ENCODE measurements at regions of chr20 and their contacts with region 1.

Region 1: DNA sequence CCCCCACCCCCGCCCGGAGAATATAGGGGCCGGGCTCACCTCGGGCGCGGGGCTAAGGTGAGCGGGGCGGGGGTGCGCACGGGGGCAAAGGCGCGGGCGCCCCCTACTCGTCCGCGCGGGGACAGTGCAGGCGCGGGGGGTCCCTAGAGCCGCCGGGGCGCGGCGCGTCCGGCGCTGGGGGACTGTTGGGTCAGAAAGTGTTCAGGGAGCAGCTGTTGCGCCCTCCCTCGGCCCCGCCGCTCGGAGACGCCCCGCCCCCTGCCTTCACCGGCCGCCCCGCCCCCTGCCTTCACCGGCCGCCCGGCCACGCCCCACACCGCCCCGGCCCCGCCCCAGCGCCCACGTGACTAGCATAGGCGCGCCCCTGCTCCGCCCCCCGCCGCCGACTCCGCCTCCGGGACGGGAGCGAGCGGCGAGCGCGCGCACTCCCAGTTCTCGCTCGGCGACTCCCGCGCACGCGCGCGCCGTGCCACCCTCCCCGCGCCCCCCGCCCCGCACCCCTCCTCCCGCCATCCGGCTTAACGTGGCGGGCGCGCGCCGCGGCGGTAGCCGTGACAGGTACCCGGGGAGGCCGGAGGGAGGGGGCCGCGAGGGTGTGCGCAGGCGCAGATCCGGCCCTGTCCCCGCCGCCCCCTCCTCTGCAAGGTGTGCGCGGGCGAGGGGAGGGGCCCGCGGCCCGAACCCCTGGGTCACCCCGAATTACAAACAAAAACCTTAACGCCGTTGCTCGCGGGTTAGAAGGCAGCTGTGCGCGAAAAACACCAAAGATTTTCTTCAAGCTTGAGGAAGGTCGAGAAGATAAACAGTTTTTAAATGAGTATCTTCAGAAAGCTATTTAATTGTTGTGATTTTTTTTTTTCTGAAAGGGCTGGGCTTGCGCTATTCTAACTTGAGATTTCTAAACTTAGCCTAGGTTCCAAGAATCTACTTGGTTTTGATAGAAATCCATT is 704 bp upstream of the ZNF217 start:
- DNase-seq: peak; percentile 48 to 95
- ATAC-seq: peak; percentile 79 to 80
- H3K4me3 ChIP-seq: peak overlapping the region; percentile 94
- H3K27ac ChIP-seq: peak overlapping the region; percentile 99 to 100
- H3K4me1 ChIP-seq: peaks cover 35% of the 10 kb centered on the region
- CTCF ChIP-seq: peak; percentile 45
- EP300 ChIP-seq: peak in 1 of 2 experiments; percentile 9; a peak in 1 of 5 replicates
- POLR2A ChIP-seq: peak; percentile 20; the same call in 1 of the 2 replicates
- RAD21 ChIP-seq: peak; percentile 29 to 68; a peak in 4 of 5 replicates

Region 2: DNA sequence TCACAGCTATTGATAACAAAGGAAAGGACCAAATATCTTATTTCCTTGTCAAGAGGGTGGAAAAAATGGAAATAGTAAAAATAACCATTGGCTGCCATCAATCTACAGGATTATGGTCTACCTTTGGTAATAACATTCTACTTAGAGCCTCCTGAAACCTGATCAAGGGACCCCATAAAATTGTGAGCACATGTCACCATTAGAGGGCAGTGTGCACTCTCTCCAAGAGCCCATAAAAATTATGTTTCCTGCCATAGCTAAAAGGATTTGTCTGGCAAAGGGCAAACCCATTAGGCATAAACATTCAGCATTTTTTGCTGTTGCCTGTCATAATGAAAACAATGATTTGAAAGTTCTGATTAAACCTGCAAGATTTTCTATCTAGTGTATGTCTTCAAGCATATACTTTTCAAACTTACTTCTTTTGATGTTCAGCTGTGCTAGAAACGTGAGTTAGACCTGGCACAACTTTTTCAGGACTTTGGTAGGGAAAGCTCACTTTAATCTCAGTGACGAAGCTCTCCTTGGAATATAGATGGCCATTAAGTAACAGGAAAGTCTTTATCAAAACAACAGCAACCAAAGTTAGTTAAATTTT is 1282.1 kb before region 1 on chr20:
- CTCF ChIA-PET with region 1: no interaction called
- POLR2A ChIA-PET with region 1: interaction called, 10 read pairs
- DNase-seq: peak; percentile 55 to 69
- ATAC-seq: peak; percentile 66 to 81; a peak in 4 of 6 replicates
- H3K4me3 ChIP-seq: no peak overlapping the region
- H3K27ac ChIP-seq: no peak overlapping the region
- H3K4me1 ChIP-seq: peaks cover 5% of the 10 kb centered on the region; the same call in 1 of the 3 replicates
- CTCF ChIP-seq: peak; percentile 71
- EP300 ChIP-seq: no peak
- POLR2A ChIP-seq: no peak
- RAD21 ChIP-seq: peak; percentile 63

Region 3: DNA sequence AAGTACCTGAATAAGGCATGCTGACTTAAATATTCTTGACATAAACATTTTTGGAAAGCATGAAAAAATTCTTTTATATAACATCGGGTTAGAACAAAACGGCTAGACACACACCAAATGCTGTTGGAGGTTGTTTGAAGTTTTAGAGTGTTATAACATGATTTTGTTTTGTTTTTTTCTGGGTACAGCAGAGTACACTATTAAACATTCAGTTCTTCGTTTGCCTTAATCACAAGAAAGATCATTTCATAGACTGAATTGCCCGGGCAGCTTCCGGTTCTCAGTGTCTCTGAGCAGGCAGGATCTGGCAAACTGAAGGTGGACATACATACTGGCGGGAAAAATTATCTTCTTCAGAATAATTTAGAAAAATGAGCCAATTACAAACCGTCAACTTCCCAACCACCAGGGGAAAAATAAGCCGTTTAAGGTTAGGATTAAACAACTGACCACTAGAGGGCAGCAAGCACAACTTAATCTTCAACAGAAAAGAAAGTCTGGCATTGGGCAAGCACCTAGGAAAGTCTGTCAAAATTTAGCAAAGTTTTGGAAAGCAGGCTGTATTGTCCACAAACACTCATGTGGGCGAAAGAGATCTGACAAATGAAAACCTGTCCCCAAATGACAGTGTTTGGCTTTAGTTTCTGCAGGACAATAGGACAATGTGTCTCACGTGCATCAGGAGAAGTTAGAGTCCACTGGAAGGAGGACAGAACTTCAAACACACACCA is 15.7 kb before region 1 on chr20:
- CTCF ChIA-PET with region 1: interaction called, 6 read pairs
- POLR2A ChIA-PET with region 1: interaction called, 18 read pairs
- DNase-seq: peak; percentile 90
- ATAC-seq: peak; percentile 57 to 73; a peak in 5 of 6 replicates
- H3K4me3 ChIP-seq: peak overlapping the region; percentile 21; the same call in 2 of the 3 replicates
- H3K27ac ChIP-seq: peak overlapping the region; percentile 75 to 87
- H3K4me1 ChIP-seq: peaks cover 62% of the 10 kb centered on the region
- CTCF ChIP-seq: peak; percentile 91
- EP300 ChIP-seq: no peak
- POLR2A ChIP-seq: no peak
- RAD21 ChIP-seq: peak; percentile 83 to 91

Region 4: DNA sequence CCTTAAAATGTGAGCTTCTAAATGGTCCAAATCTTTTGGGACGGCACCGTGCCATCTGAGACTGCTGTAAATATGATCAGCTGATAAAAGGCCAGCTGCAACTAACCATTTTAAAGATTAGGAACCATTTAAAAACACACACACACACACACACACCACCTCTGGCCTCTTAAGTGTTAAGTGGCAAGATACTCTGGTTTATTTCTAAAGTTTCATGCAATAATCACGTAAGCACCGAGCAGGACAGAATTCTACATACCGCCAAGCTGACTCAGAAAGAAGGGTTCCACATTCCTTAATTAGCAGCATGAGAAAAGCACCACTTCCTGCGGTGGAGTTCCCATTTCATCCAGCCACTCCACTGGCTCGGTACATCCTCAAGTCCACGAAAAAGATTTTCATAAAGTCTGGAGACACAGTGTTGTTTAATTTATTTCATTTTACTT is 17.1 kb after region 1 on chr20:
- CTCF ChIA-PET with region 1: interaction called, 3 read pairs
- POLR2A ChIA-PET with region 1: interaction called, 24 read pairs
- DNase-seq: peak; percentile 65 to 90
- ATAC-seq: peak; percentile 66 to 74
- H3K4me3 ChIP-seq: 0 out of 3 replicates have a peak overlapping the region, but pooled peaks have one; percentile 0
- H3K27ac ChIP-seq: peak overlapping the region; percentile 74 to 91
- H3K4me1 ChIP-seq: peaks cover 57% of the 10 kb centered on the region
- CTCF ChIP-seq: no peak
- EP300 ChIP-seq: peak in 1 of 2 experiments; percentile 37; a peak in 1 of 5 replicates
- POLR2A ChIP-seq: no peak
- RAD21 ChIP-seq: 0 out of 5 replicates have a peak, but pooled peaks of 1 of the 2 experiments have one; percentile 26

Region 5: GRCh38 chr20:53643031-53643832 is 48.9 kb after region 1 on chr20:
- CTCF ChIA-PET with region 1: interaction called, 4 read pairs
- POLR2A ChIA-PET with region 1: interaction called, 14 read pairs
- DNase-seq: peak; percentile 82 to 87
- ATAC-seq: peak; percentile 93
- H3K4me3 ChIP-seq: 0 out of 3 replicates have a peak overlapping the region, but pooled peaks have one; percentile 14
- H3K27ac ChIP-seq: peak overlapping the region; percentile 75 to 87
- H3K4me1 ChIP-seq: peaks cover 34% of the 10 kb centered on the region
- CTCF ChIP-seq: no peak
- EP300 ChIP-seq: 0 out of 5 replicates have a peak, but pooled peaks of 1 of the 2 experiments have one; percentile 16
- POLR2A ChIP-seq: no peak
- RAD21 ChIP-seq: peak in 1 of 2 experiments; percentile 15; a peak in 2 of 5 replicates

Region 6: DNA sequence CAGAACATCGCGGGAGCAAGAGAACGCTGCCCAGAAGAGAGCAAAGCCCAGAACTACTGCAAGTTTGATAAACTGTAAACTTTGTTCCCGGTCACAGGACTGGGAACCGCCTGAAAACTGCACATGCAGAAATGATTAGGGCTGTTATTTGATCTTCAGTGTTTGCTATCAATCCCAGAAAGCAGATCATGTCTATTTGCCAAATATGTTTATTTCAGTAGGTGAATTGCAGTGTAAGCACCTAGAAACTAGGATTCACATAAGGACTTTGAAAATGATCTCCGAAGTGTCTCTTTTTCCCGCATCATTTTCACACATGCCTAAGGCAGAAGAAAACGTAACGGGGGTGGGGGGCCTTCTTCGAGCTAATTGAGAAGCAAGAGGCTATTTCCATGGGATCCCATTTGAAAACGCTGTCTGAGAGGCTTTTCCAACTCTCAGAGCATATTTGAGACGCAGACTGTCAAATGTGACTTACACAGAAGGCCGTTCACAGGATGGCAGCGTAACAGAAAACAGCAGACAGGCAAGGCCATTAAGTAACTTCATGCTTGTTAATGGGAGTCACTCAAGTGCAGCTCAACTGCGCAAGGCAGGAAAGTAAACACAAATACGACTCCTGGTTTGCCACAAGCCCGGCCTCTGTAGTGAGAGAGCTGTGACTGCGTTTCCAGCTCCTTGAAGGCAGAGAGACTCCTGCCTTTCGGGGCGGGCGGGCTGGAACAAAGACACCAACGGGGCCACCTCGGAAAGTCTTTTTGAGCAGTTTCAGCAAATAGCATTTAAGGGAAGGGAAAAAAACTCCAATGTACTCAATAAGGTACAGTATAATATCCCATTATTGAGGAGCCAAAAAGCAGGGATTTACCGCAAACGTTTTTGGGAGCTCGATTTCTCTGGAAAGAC is 143.9 kb after region 1 on chr20:
- CTCF ChIA-PET with region 1: interaction called, 6 read pairs
- POLR2A ChIA-PET with region 1: interaction called, 22 read pairs
- DNase-seq: peak; percentile 67 to 95
- ATAC-seq: peak; percentile 90 to 91
- H3K4me3 ChIP-seq: peak overlapping the region; percentile 27; the same call in 2 of the 3 replicates
- H3K27ac ChIP-seq: peak overlapping the region; percentile 89 to 90
- H3K4me1 ChIP-seq: peaks cover 72% of the 10 kb centered on the region
- CTCF ChIP-seq: no peak
- EP300 ChIP-seq: no peak
- POLR2A ChIP-seq: peak; percentile 41
- RAD21 ChIP-seq: peak; percentile 13 to 37; a peak in 3 of 5 replicates

Region 7: DNA sequence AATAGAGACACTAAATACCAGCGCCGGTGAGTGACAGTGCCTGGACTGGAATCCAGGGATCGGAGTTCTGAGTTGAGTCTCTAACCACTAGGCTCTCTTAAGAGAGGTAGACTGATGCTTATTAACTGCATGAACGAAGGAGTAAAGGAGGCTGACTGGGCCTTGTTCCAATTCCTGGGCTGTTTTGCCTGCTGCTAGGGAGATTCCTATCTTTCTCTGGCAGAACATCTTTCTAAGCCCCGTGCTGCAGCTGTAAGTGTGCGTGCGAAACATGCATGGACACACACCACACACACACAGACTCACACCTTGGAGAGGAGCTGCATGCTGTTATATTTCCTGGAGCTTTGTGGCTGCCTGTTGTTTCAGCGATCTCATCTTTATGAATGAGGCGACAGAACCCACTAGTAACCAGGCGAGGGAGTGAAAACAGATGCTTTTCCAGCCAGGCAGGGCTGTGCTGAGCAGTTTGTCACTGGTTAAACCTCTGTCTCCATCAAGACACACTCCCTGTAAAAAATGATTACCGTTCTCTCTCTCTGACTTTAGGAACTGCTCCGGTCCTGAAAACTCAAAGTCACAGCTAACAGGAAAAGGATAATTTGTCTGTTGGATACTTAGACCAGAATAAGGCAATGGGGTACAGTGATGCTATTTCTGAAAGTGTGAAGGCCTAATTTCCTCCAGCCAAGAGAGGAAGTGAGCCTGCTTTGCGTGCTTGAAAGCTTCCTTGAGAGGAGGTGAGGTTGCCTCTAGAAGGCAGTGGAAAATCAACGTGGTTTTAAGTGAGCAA is 156.7 kb after region 1 on chr20:
- CTCF ChIA-PET with region 1: no interaction called
- POLR2A ChIA-PET with region 1: interaction called, 17 read pairs
- DNase-seq: no peak
- ATAC-seq: peak in 1 of 2 experiments; percentile 12; a peak in 1 of 6 replicates
- H3K4me3 ChIP-seq: no peak overlapping the region
- H3K27ac ChIP-seq: peak overlapping the region; percentile 86
- H3K4me1 ChIP-seq: peaks cover 53% of the 10 kb centered on the region
- CTCF ChIP-seq: no peak
- EP300 ChIP-seq: no peak
- POLR2A ChIP-seq: no peak
- RAD21 ChIP-seq: no peak